H1 (cell line): ENCODE measurements at regions of chr3 and their contacts with region 1.

Region 1: GRCh38 chr3:43071313-43071893 is 34.5 kb downstream of the POMGNT2 start:
- DNase-seq: peak; percentile 27 to 77
- H3K4me3 ChIP-seq: no peak overlapping the region
- H3K27ac ChIP-seq: no peak overlapping the region
- H3K4me1 ChIP-seq: no peaks in the 10 kb centered on the region
- H3K27me3 ChIP-seq: no peaks in the 10 kb centered on the region
- CTCF ChIP-seq: peak; percentile 62 to 78 (median 62); a peak in 3 of 4 replicates
- EP300 ChIP-seq: no peak
- POLR2A ChIP-seq: no peak
- RAD21 ChIP-seq: peak; percentile 67 to 77

Region 2: DNA sequence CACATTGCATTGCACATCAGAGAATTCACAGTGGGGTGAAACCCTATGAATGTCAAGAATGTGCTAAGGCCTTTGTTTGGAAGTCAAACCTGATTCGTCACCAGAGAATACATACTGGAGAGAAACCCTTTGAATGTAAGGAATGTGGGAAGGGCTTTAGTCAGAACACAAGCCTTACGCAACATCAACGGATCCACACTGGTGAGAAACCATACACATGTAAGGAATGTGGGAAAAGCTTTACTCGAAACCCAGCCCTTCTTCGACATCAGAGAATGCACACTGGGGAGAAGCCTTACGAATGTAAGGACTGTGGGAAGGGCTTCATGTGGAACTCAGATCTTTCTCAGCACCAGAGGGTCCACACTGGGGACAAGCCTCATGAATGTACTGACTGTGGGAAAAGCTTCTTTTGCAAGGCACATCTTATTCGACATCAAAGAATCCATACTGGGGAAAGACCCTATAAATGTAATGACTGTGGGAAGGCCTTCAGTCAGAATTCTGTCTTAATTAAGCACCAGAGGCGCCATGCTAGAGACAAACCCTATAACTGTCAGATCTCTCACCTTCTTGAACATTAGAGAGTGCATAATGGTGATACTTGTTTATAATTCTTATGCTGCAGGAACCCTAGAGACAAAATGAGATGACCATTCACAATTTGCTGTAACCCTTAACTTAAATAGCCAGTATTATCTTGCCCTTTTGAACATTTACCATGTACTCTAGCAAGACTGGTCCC is 156.5 kb before region 1 on chr3:
- CTCF ChIA-PET with region 1: no interaction called
- POLR2A ChIA-PET with region 1: no interaction called
- DNase-seq: no peak
- H3K4me3 ChIP-seq: no peak overlapping the region
- H3K27ac ChIP-seq: no peak overlapping the region
- H3K4me1 ChIP-seq: no peaks in the 10 kb centered on the region
- H3K27me3 ChIP-seq: no peaks in the 10 kb centered on the region
- CTCF ChIP-seq: no peak
- EP300 ChIP-seq: no peak
- POLR2A ChIP-seq: no peak
- RAD21 ChIP-seq: no peak

Region 3: GRCh38 chr3:43081796-43082195 is 10.4 kb after region 1 on chr3:
- CTCF ChIA-PET with region 1: interaction called, 17 read pairs
- POLR2A ChIA-PET with region 1: no interaction called
- DNase-seq: peak in 1 of 2 experiments; percentile 17
- H3K4me3 ChIP-seq: no peak overlapping the region
- H3K27ac ChIP-seq: no peak overlapping the region
- H3K4me1 ChIP-seq: no peaks in the 10 kb centered on the region
- H3K27me3 ChIP-seq: no peaks in the 10 kb centered on the region
- CTCF ChIP-seq: no peak
- EP300 ChIP-seq: no peak
- POLR2A ChIP-seq: no peak
- RAD21 ChIP-seq: no peak

Region 4: DNA sequence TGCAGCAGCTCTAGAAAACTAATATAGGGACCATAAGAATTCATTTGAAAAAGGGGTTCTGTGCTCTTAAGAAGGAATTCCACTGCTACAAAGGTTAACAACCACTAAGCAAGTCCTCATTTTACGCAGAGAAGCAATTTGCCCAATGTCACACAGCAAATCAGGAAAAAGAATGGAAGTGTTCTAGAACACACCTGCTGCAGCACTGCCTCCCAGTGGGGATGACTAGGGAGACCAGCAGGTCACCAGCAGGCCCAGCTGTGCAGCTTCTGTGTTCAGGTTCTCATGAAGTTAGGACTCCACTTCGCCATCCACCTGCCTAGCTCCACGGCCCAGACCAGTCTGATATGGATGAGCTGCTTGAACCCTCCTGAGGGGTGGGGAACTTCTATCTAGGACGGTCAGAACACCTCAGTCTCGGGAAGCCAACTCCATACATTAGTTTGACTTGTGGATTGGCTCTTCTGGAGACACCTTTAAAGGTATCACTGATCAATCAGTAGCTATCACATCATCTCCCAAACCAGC is 15.9 kb after region 1 on chr3:
- CTCF ChIA-PET with region 1: interaction called, 17 read pairs
- POLR2A ChIA-PET with region 1: no interaction called
- DNase-seq: no peak
- H3K4me3 ChIP-seq: no peak overlapping the region
- H3K27ac ChIP-seq: no peak overlapping the region
- H3K4me1 ChIP-seq: no peaks in the 10 kb centered on the region
- H3K27me3 ChIP-seq: no peaks in the 10 kb centered on the region
- CTCF ChIP-seq: peak in 1 of 3 experiments; percentile 19; a peak in 1 of 4 replicates
- EP300 ChIP-seq: no peak
- POLR2A ChIP-seq: no peak
- RAD21 ChIP-seq: peak; percentile 19 to 43; a peak in 3 of 4 replicates

Region 5: DNA sequence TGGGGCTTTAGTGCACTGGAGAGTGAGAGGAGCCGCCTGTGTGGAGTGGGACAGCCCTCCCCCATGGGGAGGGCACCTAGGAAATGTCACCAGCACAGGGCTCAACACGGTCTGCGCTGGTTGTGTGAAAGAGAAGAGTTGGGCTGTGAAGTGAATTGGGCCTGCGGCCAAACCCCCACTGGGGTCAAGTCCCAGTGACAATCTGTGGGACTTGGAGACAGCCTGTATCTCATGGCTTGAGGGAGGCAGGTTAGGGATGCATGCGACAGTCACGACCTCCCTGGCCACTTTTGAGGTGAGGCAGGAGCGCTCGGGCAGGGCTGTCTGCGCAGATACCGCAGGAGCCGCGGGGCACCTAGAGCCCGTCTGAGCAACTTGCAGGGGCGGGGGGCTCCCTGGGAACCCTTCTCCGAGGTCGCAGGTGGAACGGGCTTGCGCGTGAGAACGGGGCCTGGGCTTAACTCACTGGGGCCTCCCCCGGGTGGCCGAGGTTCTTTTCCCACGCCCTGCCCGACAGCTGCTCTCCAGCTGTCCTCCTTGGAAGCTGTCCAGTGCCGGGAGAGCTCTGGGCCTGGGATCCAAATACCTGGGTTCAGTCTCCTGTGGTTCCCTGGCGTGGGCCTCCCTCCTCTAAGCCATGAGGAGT is 292.3 kb after region 1 on chr3:
- CTCF ChIA-PET with region 1: no interaction called
- POLR2A ChIA-PET with region 1: no interaction called
- DNase-seq: no peak
- H3K4me3 ChIP-seq: no peak overlapping the region
- H3K27ac ChIP-seq: no peak overlapping the region
- H3K4me1 ChIP-seq: peaks cover 0 to 12% (median 5%) of the 10 kb centered on the region in 4 experiments; a peak in 5 of 7 replicates
- H3K27me3 ChIP-seq: peaks cover 0 to 4% (median 1%) of the 10 kb centered on the region in 4 experiments; a peak in 2 of 7 replicates
- CTCF ChIP-seq: no peak
- EP300 ChIP-seq: no peak
- POLR2A ChIP-seq: no peak
- RAD21 ChIP-seq: no peak